Prostate gland (tissue), 2 donors: ENCODE measurements at regions of chr16 and their contacts with region 1.

Region 1: DNA sequence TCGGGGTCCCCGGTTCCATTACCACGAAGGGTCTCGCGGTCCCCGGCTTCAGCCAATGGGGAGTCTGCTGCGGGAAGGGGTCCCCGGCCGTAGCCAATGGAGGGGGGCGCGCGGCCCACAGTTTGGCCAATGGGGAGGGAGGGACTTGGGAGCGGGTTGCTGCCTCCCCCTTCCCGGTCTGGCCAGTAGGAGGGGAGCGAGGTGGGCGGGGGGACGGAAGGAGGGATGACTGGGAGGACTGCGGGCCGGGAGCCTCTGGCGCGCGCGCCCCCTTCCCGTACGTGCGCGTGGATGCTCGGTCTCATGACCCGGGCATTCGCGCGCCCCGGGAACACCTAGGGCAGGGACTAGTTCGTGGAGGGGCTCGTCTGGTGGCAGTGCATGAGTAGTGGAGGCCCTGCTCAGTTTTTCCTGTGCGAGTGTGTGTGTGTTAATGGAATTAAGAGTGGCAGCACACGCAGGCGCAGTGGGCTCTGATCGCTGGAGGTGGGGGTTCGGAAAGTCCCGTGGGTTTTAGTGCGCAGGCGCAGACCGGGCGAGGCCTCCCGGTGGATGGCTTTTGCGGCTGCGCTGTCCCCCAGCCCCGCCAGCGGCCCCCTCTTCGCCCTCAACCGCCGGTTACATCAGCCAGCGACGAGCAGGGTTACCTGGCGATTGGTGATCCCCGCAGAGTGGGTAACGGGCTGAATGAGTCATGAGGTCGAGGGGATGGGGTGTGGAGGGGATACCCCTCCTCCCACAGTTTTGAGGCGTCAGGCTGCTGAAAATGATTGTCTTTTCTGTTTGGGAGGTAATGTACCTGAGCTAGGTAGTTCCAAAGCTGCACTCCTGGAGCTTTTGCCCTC is 1.3 kb downstream of the ATXN2L start:
- DNase-seq: peak; percentile 95
- H3K4me3 ChIP-seq: peak overlapping the region; percentile 96 to 100
- H3K27ac ChIP-seq: peak overlapping the region; percentile 98 to 99
- H3K4me1 ChIP-seq: peaks cover 8% of the 10 kb centered on the region
- H3K27me3 ChIP-seq: no peaks in the 10 kb centered on the region
- CTCF ChIP-seq: peak in 2 of 4 experiments; percentile 44 to 68
- POLR2A ChIP-seq: peak; percentile 57

Region 2: DNA sequence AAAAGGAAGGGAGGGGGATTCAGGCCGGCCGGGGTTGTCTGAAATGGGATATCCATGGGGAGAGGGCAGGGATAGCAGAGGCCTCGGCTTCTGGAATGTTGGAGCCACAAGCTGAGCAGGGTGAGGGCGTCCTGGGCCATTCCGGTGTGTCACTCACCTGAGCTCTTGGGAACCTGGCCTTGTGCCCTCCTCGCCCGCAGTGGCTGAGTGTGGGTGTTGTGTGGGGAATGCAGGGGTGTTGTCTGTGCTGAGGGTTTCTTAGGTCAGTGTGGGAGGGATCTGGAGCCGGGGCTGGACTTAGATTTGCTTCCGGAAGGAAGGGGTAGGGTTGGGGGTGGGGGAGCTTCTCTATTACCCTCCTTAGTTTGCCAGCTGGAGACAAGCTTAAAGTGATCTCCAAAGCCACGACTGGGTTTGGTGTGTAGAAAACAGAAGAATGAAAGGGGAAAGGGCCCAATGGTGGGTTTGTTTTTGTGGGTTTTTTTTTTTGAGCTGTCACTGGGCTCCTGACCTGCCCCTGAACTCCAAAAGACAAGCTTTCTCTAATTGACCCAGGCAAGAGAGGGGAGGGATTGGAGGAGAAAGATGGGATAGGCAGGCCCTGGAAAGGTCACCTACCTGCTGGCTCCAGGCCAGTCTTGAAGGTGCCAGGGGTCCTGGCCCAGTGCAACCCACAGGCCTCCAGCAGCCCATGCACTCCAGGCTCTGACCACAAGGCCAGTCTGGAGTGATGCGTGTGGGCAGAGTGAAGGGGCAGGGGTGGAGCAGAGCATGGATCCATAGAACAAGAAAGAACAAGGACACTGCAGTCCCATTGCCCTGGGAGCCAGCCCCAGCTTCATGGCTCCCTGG is 227.0 kb before region 1 on chr16 and contains the start of gene SULT1A2:
- intact Hi-C with region 1: no loop called
- DNase-seq: no peak
- H3K4me3 ChIP-seq: no peak within 1 kb of the TSS
- H3K27ac ChIP-seq: no peak within 1 kb of the TSS
- H3K4me1 ChIP-seq: no peaks in the 10 kb centered on the region
- H3K27me3 ChIP-seq: no peaks in the 10 kb centered on the region
- CTCF ChIP-seq: no peak
- POLR2A ChIP-seq: no peak
- total RNA-seq, gene SULT1A2: 0.96 to 3.1 TPM

Region 3: DNA sequence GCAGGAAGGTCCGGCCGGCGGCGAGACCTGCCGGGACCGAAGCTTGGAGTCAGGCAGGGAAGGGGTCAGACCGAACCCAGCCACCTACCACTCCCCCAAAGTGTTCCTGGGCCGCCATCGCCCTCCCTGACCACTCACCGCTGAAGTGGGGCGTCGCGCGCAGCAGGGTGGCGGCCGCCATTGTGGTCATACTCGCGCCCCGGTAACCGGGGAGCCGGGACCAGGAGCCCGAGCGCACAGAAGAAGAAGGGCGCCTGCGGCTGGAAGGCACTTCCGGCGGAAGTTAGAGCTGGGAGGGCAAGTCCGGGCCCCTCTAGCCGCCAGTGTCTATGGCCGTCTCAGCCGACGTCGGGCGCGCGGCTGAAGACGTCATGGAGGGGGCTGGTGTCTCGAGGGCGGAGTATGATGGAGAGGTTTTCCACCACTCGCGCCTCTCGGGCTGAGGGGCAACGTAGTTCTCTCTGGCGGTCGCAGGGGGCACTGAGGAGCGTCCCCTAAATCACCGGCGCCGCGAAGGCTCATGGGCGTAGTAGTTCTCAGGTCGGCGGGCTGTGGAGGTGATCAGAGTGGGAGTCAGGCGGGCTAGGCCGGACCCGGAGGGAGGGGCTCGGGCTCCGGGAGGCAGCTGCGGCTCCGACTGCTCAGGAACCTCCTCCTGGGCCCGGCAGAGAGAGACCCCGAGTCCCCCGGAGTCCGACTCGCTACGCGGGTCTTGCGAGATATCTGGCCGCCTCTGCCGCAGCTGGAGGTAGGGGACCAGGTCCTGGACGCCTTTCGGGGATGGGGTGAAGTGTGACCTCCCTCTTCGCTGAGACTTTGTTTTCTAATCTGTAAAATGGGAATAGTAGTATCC is 22.2 kb after region 1 on chr16 and contains the start of gene TUFM:
- intact Hi-C with region 1: loop called (anchors 1 kb)
- DNase-seq: peak; percentile 97
- H3K4me3 ChIP-seq: peak within 1 kb of the TSS; percentile 89 to 93
- H3K27ac ChIP-seq: peak within 1 kb of the TSS; percentile 80 to 91
- H3K4me1 ChIP-seq: peaks cover 17% of the 10 kb centered on the region
- H3K27me3 ChIP-seq: no peaks in the 10 kb centered on the region
- CTCF ChIP-seq: peak; percentile 35 to 83 (median 58)
- POLR2A ChIP-seq: peak; percentile 54
- total RNA-seq, gene TUFM: 114 to 151 TPM

Region 4: GRCh38 chr16:28924732-28925385 is 100.8 kb after region 1 on chr16 and contains the start of gene RABEP2:
- intact Hi-C with region 1: no loop called
- DNase-seq: peak; percentile 99
- H3K4me3 ChIP-seq: peak within 1 kb of the TSS; percentile 61 to 77
- H3K27ac ChIP-seq: peak within 1 kb of the TSS; percentile 96 to 98
- H3K4me1 ChIP-seq: no peaks in the 10 kb centered on the region
- H3K27me3 ChIP-seq: no peaks in the 10 kb centered on the region
- CTCF ChIP-seq: no peak
- POLR2A ChIP-seq: peak; percentile 40
- total RNA-seq, gene RABEP2: 128 to 139 TPM